ENCODE measurements at regions of chr10 and their contacts with region 1.

Region 1: DNA sequence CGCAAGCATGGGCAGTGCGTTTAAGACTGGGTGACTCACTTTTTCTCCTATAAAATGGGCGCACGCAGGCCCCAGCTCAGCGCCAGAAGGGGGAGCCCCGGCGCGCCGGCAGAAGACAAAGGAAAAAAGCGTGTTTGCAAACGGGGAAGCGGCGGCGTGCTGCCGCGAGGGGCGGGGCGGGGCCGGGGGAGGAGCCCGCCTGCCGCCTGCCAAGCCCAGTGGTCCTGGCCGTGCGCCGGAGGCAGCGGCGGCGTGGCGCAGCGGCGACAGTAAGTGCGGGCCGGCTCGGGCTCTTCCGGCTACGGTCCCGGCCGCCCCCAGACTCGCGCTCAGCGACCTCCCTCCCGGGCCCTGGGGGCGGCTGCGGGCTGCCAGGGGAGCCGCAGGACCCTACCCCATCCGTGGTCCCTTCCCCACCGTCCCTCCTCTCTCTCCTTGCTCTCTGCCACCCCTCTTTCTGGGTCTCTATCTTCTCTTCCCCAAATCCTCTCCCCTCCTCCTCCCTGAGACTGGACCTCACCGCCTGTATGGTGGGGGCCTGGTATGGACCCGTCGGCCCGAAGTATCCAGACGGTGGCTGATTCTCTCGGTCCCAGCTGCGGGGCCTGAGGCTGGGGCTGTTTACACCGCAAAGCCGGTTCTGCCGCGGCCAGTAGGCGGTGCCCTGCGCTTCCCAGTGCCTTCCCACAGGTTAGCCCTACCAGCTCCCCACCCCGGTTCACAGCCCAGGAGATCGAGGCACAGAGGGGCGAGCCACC is at the start of gene SLC29A3:
- DNase-seq: peak; percentile 95
- H3K4me3 ChIP-seq: peak within 1 kb of the TSS; percentile 51 to 84 (median 70)
- H3K27ac ChIP-seq: peak within 1 kb of the TSS; percentile 52 to 88 (median 80)
- H3K4me1 ChIP-seq: peaks cover 7 to 59% (median 33%) of the 10 kb centered on the region in 6 donors
- H3K27me3 ChIP-seq: no peaks in the 10 kb centered on the region
- CTCF ChIP-seq: peak; percentile 23 to 72 (median 61)
- POLR2A ChIP-seq: peak in 1 of 3 donors; percentile 60
- total RNA-seq, gene SLC29A3: 7.5 to 15.6 (median 9.3) TPM

Region 2: GRCh38 chr10:71368643-71369042 is 49.4 kb after region 1 on chr10:
- intact Hi-C with region 1: loop called (anchors 5 kb)
- DNase-seq: no peak
- H3K4me3 ChIP-seq: no peak overlapping the region
- H3K27ac ChIP-seq: no peak overlapping the region
- H3K4me1 ChIP-seq: peaks cover 0 to 44% (median 19%) of the 10 kb centered on the region in 6 donors
- H3K27me3 ChIP-seq: no peaks in the 10 kb centered on the region
- CTCF ChIP-seq: no peak
- POLR2A ChIP-seq: no peak

Region 3: GRCh38 chr10:71696628-71697326 is 377.6 kb after region 1 on chr10:
- intact Hi-C with region 1: loop called (anchors 10 kb)
- DNase-seq: peak; percentile 90
- H3K4me3 ChIP-seq: no peak overlapping the region
- H3K27ac ChIP-seq: peak overlapping the region in 4 of 8 donors; percentile 68 to 83 (median 80)
- H3K4me1 ChIP-seq: peaks cover 35 to 93% (median 61%) of the 10 kb centered on the region in 6 donors
- H3K27me3 ChIP-seq: no peaks in the 10 kb centered on the region
- CTCF ChIP-seq: peak; percentile 59 to 90 (median 83)
- POLR2A ChIP-seq: no peak

Region 4: DNA sequence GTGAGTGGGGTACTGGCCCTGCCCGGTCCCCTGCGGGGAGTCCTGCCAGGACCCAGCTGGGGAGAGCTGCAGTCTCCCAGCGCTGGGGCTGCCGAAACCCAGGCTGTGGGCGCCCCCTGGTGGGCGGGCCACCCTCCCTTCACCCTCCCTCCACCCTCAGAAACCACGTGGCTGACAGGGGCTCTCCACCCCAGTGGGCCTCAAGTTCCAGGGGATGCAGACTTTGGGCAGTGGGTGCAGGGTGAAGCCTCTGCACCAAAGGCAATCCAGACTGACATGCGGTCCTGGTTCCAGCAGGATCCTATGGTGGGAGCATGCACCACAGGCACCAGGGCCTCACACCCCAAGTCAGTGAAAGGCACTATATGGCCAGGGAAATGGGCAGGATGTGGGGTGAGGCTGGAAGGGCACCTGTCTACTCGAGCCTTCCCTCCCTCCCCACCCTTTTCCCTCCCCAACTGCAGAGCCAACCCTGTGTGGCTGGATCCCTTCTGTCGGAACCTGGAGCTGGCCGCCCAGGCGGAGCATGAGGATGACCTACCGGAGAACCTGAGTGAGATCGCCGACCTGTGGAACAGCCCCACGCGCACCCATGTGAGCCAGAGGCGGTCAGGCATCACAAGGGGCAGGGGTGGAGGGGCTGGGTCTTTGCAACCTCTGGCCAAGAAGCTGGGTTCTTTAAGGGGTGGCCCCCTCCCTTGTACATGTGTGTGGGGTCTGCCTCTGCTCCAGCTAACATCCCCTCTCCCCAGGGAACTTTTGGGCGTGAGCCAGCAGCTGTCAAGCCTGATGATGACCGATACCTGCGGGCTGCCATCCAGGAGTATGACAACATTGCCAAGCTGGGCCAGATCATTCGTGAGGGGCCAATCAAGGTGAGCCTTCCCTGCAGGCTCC is 493.0 kb after region 1 on chr10:
- intact Hi-C with region 1: loop called (anchors 10 kb)
- DNase-seq: peak; percentile 96
- H3K4me3 ChIP-seq: peak overlapping the region in 1 of 8 donors; percentile 4
- H3K27ac ChIP-seq: peak overlapping the region in 3 of 8 donors; percentile 7 to 92 (median 32)
- H3K4me1 ChIP-seq: peaks cover 2 to 61% (median 41%) of the 10 kb centered on the region in 6 donors
- H3K27me3 ChIP-seq: no peaks in the 10 kb centered on the region
- CTCF ChIP-seq: peak; percentile 93 to 98 (median 96)
- POLR2A ChIP-seq: no peak

Region 5: GRCh38 chr10:71899665-71900412 is 580.6 kb after region 1 on chr10:
- intact Hi-C with region 1: loop called (anchors 5 kb)
- DNase-seq: no peak
- H3K4me3 ChIP-seq: no peak overlapping the region
- H3K27ac ChIP-seq: no peak overlapping the region
- H3K4me1 ChIP-seq: peaks cover 0 to 16% (median 8%) of the 10 kb centered on the region in 6 donors
- H3K27me3 ChIP-seq: no peaks in the 10 kb centered on the region
- CTCF ChIP-seq: no peak
- POLR2A ChIP-seq: no peak

Region 6: GRCh38 chr10:72048450-72049124 is 729.4 kb after region 1 on chr10:
- intact Hi-C with region 1: loop called (anchors 10 kb)
- DNase-seq: peak; percentile 94
- H3K4me3 ChIP-seq: no peak overlapping the region
- H3K27ac ChIP-seq: no peak overlapping the region
- H3K4me1 ChIP-seq: peaks cover 0 to 14% (median 8%) of the 10 kb centered on the region in 6 donors
- H3K27me3 ChIP-seq: no peaks in the 10 kb centered on the region
- CTCF ChIP-seq: peak; percentile 98 to 99 (median 99)
- POLR2A ChIP-seq: no peak